ENCODE measurements at regions of chr10 and their contacts with region 1.

Region 1: GRCh38 chr10:68208424-68209042 is 23.4 kb downstream of the ATOH7 start:
- DNase-seq: peak; percentile 63
- H3K4me3 Mint-ChIP-seq: no peak overlapping the region
- H3K27ac Mint-ChIP-seq: no peak overlapping the region
- H3K4me1 Mint-ChIP-seq: no peaks in the 10 kb centered on the region
- H3K27me3 Mint-ChIP-seq: no peaks in the 10 kb centered on the region

Region 2: DNA sequence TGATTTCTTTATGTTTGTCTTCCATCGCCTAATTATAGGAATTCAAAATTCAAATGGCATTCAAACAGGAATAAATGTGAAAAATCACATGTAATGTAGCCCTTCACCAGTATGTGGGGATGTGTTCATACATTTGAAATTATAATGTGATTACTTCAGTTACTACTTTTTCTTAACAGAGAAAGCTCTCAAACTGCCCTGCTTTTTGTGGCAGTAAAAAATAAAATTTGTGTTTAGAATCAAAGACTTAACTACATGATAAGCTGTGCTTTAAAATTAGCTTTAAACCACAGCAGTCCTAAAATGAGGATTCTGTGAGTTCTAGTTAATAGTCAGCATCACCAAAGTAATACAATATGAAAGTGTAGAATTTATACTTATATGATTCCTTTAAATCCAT is 125.7 kb before region 1 on chr10:
- CTCF ChIA-PET with region 1: no interaction called
- intact Hi-C with region 1: loop called (anchors 2 kb)
- DNase-seq: no peak
- H3K4me3 Mint-ChIP-seq: no peak overlapping the region
- H3K27ac Mint-ChIP-seq: no peak overlapping the region
- H3K4me1 Mint-ChIP-seq: peaks cover 2% of the 10 kb centered on the region
- H3K27me3 Mint-ChIP-seq: peaks cover 5% of the 10 kb centered on the region

Region 3: DNA sequence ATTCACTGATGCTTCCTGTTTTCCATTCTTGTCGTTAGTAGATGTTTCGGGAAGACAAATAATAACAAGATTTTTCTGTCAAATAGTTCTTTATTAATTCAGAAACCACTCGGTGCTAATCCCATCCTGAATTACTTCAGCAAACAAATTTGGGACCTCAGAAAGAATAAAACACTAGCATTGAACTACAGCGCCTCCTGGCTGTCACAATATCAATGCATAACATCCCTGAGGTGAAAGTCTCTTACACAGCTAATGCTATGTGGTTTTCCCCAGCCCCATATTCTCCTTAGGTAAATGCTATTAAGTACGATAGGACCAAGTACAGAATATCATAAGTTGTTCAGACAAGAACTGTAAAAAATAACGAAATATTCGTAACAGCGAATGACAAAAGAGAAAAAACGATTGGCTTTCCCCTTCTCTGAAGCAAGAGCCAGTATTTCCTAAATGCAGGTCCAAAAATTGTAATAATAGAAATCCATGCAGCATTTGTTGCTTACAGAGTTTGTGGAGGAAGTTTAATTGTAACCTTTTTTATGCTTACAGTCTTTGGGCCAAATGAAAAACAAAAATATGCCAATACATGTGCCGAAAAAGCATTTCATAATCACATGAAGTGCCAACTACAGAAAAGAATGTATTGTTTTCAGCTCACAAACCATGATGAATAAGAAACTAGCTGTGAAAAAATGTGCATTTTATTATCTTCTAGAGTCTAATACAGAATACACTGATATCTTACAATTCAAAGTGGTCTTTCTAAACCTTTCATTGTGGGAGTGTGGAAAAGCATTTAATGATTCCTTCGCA is 52.0 kb before region 1 on chr10:
- CTCF ChIA-PET with region 1: interaction called, 4 read pairs
- intact Hi-C with region 1: loop called (anchors 2 kb)
- DNase-seq: peak; percentile 83
- H3K4me3 Mint-ChIP-seq: no peak overlapping the region
- H3K27ac Mint-ChIP-seq: no peak overlapping the region
- H3K4me1 Mint-ChIP-seq: peaks cover 2% of the 10 kb centered on the region
- H3K27me3 Mint-ChIP-seq: peaks cover 3% of the 10 kb centered on the region

Region 4: DNA sequence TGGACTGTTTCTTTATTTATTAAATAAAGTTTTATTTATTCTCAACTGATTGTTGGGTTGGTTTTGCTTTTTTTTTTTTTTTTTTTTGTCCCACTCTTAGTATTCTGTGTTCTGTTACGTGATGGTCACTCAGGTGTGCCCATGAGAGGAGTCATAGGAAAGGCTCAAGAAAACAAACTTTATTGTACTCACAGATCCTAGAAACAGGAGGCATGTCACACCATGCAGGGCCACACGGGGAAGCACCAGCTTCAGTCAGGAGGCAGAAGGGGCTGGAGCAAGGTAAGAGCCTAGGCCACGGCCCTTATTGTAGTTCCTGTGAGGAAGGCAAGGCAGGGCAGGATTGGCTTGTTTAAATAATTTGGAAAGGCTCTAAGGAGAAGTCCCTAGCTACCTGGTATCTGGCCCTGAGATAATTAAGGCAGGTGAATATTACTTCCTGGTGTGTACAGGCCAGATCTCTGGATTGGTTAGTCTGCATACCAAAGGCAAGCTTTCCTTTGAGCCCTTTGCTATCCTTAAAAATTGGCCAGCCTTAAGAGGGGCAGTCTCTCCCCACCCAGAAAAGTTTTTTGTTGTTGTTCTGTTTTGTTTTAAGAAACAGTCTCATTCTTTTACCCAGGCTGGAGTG is 15.1 kb after region 1 on chr10:
- CTCF ChIA-PET with region 1: interaction called, 15 read pairs
- intact Hi-C with region 1: no loop called
- DNase-seq: peak; percentile 25
- H3K4me3 Mint-ChIP-seq: no peak overlapping the region
- H3K27ac Mint-ChIP-seq: no peak overlapping the region
- H3K4me1 Mint-ChIP-seq: no peaks in the 10 kb centered on the region
- H3K27me3 Mint-ChIP-seq: peaks cover 7% of the 10 kb centered on the region

Region 5: GRCh38 chr10:68301790-68302502 is 93.4 kb after region 1 on chr10:
- CTCF ChIA-PET with region 1: interaction called, 46 read pairs
- intact Hi-C with region 1: loop called (anchors 1 kb)
- DNase-seq: no peak
- H3K4me3 Mint-ChIP-seq: no peak overlapping the region
- H3K27ac Mint-ChIP-seq: no peak overlapping the region
- H3K4me1 Mint-ChIP-seq: no peaks in the 10 kb centered on the region
- H3K27me3 Mint-ChIP-seq: no peaks in the 10 kb centered on the region

Region 6: GRCh38 chr10:68348265-68348741 is 139.8 kb after region 1 on chr10:
- CTCF ChIA-PET with region 1: interaction called, 12 read pairs
- intact Hi-C with region 1: loop called (anchors 1 kb)
- DNase-seq: peak; percentile 63
- H3K4me3 Mint-ChIP-seq: no peak overlapping the region
- H3K27ac Mint-ChIP-seq: no peak overlapping the region
- H3K4me1 Mint-ChIP-seq: peaks cover 10% of the 10 kb centered on the region
- H3K27me3 Mint-ChIP-seq: no peaks in the 10 kb centered on the region